WTC11 (cell line): ENCODE measurements at regions of chr4 and their contacts with region 1.

Region 1: GRCh38 chr4:139177868-139178611 is 1.0 kb upstream of the ELF2 start:
- DNase-seq: peak; percentile 96
- ATAC-seq: peak; percentile 72
- H3K4me3 Mint-ChIP-seq: peak overlapping the region; percentile 77
- H3K27ac Mint-ChIP-seq: peak overlapping the region; percentile 98
- H3K4me1 Mint-ChIP-seq: peaks cover 31% of the 10 kb centered on the region
- H3K27me3 Mint-ChIP-seq: peaks cover 19% of the 10 kb centered on the region
- CTCF ChIP-seq: no peak

Region 2: GRCh38 chr4:139153420-139154133 is 24.5 kb before region 1 on chr4:
- CTCF ChIA-PET with region 1: interaction called, 5 read pairs
- POLR2A ChIA-PET with region 1: interaction called, 37 read pairs
- DNase-seq: no peak
- ATAC-seq: peak; percentile 62
- H3K4me3 Mint-ChIP-seq: peak overlapping the region; percentile 22
- H3K27ac Mint-ChIP-seq: peak overlapping the region; percentile 97
- H3K4me1 Mint-ChIP-seq: peaks cover 68% of the 10 kb centered on the region
- H3K27me3 Mint-ChIP-seq: no peaks in the 10 kb centered on the region
- CTCF ChIP-seq: no peak

Region 3: DNA sequence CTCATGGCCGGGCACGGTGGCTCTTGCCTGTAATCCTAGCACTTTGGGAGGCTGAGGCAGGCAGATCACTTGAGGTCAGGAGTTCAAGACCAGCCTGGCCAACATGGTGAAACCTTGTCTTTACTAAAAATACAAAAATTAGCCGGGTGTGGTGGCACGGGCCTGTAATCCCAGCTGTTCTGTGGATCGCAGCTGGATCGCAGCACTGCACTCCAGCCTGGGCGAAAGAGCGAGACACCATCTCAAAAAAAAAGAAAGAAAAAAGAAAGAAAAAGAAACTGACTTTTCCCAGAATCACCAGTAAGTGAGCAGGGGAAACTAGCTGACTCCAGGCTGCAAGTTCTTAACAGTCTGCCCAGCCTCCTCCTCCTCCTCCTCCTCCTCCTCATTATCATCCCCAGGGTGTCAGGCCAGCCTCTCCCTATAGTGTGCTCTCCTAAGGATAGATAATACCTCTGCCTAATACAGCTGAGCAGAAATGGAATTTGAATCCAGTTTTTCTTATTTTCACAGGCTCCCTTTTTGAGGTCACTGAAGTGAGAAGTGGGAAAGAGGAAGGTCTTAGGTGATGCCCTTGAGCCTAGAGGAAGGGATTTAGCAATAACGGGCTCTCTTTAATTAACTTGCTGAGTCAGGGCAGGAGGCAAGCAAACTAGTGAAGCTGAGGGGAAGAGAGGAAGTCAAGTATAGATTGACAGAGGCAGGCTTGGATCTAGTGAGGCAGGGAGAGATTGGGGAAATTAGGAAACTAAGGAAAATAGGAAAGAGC is 10.8 kb after region 1 on chr4:
- CTCF ChIA-PET with region 1: interaction called, 3 read pairs
- POLR2A ChIA-PET with region 1: interaction called, 22 read pairs
- DNase-seq: no peak
- ATAC-seq: peak; percentile 87
- H3K4me3 Mint-ChIP-seq: no peak overlapping the region
- H3K27ac Mint-ChIP-seq: peak overlapping the region; percentile 44; the same call in 1 of the 2 replicates
- H3K4me1 Mint-ChIP-seq: peaks cover 7% of the 10 kb centered on the region
- H3K27me3 Mint-ChIP-seq: no peaks in the 10 kb centered on the region
- CTCF ChIP-seq: no peak

Region 4: GRCh38 chr4:139501117-139501516 is 323.1 kb after region 1 on chr4:
- CTCF ChIA-PET with region 1: no interaction called
- POLR2A ChIA-PET with region 1: no interaction called
- DNase-seq: no peak
- ATAC-seq: no peak
- H3K4me3 Mint-ChIP-seq: no peak overlapping the region
- H3K27ac Mint-ChIP-seq: 0 out of 2 replicates have a peak overlapping the region, but pooled peaks have one; percentile 4
- H3K4me1 Mint-ChIP-seq: peaks cover 13% of the 10 kb centered on the region
- H3K27me3 Mint-ChIP-seq: no peaks in the 10 kb centered on the region
- CTCF ChIP-seq: no peak